ENCODE measurements at regions of chr12 and their contacts with region 1.

Region 1: GRCh38 chr12:123164222-123164621 is 13.3 kb upstream of the PITPNM2 start:
- DNase-seq: no peak
- H3K4me3 ChIP-seq: no peak overlapping the region
- H3K27me3 ChIP-seq: no peaks in the 10 kb centered on the region
- CTCF ChIP-seq: no peak

Region 2: DNA sequence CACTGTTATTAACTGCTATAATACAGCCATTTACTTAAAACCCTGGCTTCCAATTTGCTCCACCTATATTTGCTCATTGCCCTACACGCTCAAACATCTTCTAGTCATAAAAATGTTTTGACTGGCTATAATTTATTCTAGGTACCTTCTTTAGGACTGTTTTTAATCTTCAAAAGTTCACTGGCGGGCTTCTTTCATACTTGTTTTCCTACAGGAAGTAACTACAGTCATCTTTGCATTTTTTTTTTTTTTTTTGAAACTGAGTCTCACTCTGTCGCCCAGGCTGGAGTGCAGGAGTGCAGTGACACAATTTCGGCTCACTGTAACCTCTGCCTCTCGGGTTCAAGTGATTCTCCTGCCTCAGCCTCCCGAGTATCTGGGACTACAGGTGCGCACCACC is 36.2 kb after region 1 on chr12:
- CTCF ChIA-PET with region 1: no interaction called
- POLR2A ChIA-PET with region 1: interaction called, 13 read pairs
- DNase-seq: no peak
- H3K4me3 ChIP-seq: no peak overlapping the region
- H3K27me3 ChIP-seq: no peaks in the 10 kb centered on the region
- CTCF ChIP-seq: no peak

Measured in BJ (cell line).